ENCODE measurements at regions of chr9 and their contacts with region 1.

Region 1: DNA sequence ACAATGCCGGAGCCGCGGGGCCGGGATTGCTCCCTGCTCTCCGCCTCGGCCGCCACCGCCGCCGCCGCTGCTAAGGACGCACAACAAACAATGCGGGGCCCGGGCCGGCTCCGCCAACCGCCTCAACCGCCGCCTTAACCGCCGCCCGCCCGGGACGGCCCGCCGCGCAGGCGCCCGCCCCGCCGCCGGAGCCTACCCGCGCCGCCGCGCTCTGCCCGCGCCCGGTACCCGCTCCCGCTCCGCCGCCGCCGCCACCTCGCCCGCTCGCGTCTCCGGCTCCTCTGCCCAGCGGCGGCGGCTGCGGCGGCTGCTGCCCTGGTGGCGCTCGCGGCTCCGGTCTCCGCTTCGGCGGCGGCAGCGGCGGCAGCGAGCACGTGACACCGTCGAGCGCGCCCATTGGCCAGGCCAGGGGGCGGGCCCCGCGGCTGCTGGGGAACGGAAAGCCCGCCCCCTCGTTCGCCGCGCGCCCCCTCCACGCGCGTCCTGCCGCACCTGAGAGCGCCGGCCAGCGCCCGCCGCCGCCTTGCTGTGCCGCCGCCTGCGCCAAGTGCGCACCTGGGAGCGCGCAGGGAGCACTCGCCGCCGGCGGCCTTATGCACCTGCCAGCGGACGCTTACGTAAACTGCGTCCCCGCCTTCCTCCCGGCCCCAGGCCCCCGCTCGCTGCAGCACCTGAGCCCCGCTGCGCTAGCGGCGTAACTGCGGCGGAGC is at the start of gene STRBP:
- DNase-seq: peak; percentile 98
- H3K4me3 Mint-ChIP-seq: peak within 1 kb of the TSS; percentile 78
- H3K27ac Mint-ChIP-seq: peak within 1 kb of the TSS; percentile 50
- H3K4me1 Mint-ChIP-seq: peaks cover 29% of the 10 kb centered on the region
- H3K27me3 Mint-ChIP-seq: peaks cover 13% of the 10 kb centered on the region
- total RNA-seq, gene STRBP: 25.1 and 25.8 TPM in 2 replicates

Region 2: GRCh38 chr9:123302348-123303214 is 34.2 kb after region 1 on chr9:
- intact Hi-C with region 1: loop called (anchors 5 kb)
- DNase-seq: peak; percentile 73
- H3K4me3 Mint-ChIP-seq: peak overlapping the region; percentile 20
- H3K27ac Mint-ChIP-seq: no peak overlapping the region
- H3K4me1 Mint-ChIP-seq: peaks cover 22% of the 10 kb centered on the region
- H3K27me3 Mint-ChIP-seq: no peaks in the 10 kb centered on the region

Region 3: GRCh38 chr9:123911024-123911423 is 642.6 kb after region 1 on chr9:
- intact Hi-C with region 1: no loop called
- DNase-seq: no peak
- H3K4me3 Mint-ChIP-seq: no peak overlapping the region
- H3K27ac Mint-ChIP-seq: no peak overlapping the region
- H3K4me1 Mint-ChIP-seq: peaks cover 8% of the 10 kb centered on the region
- H3K27me3 Mint-ChIP-seq: no peaks in the 10 kb centered on the region